ENCODE measurements at regions of chrX and their contacts with region 1.

Region 1: GRCh38 chrX:112642349-112642748 is 37.4 kb downstream of the LHFPL1 start:
- DNase-seq: peak in 7 of 9 experiments; percentile 0 to 50 (median 17)
- ATAC-seq: peak; percentile 44
- H3K4me3 ChIP-seq: no peak overlapping the region
- H3K4me3 Mint-ChIP-seq: no peak overlapping the region
- H3K27ac ChIP-seq: no peak overlapping the region
- H3K27ac Mint-ChIP-seq: no peak overlapping the region
- H3K4me1 ChIP-seq: no peaks in the 10 kb centered on the region
- H3K4me1 Mint-ChIP-seq: peaks cover 3% of the 10 kb centered on the region
- H3K27me3 ChIP-seq: no peaks in the 10 kb centered on the region
- H3K27me3 Mint-ChIP-seq: no peaks in the 10 kb centered on the region
- CTCF ChIP-seq: peak; percentile 56

Region 2: GRCh38 chrX:111869639-111870034 is 772.7 kb before region 1 on chrX:
- CTCF ChIA-PET with region 1: no interaction called
- POLR2A ChIA-PET with region 1: no interaction called
- intact Hi-C with region 1: loop called in 1 of 2 experiments (anchors 5 kb)
- DNase-seq: peak in 2 of 9 experiments; percentile 12 to 24
- ATAC-seq: no peak
- H3K4me3 ChIP-seq: no peak overlapping the region
- H3K4me3 Mint-ChIP-seq: no peak overlapping the region
- H3K27ac ChIP-seq: no peak overlapping the region
- H3K27ac Mint-ChIP-seq: no peak overlapping the region
- H3K4me1 ChIP-seq: no peaks in the 10 kb centered on the region
- H3K4me1 Mint-ChIP-seq: no peaks in the 10 kb centered on the region
- H3K27me3 ChIP-seq: no peaks in the 10 kb centered on the region
- H3K27me3 Mint-ChIP-seq: peaks cover 11% of the 10 kb centered on the region
- CTCF ChIP-seq: peak; percentile 42

Region 3: DNA sequence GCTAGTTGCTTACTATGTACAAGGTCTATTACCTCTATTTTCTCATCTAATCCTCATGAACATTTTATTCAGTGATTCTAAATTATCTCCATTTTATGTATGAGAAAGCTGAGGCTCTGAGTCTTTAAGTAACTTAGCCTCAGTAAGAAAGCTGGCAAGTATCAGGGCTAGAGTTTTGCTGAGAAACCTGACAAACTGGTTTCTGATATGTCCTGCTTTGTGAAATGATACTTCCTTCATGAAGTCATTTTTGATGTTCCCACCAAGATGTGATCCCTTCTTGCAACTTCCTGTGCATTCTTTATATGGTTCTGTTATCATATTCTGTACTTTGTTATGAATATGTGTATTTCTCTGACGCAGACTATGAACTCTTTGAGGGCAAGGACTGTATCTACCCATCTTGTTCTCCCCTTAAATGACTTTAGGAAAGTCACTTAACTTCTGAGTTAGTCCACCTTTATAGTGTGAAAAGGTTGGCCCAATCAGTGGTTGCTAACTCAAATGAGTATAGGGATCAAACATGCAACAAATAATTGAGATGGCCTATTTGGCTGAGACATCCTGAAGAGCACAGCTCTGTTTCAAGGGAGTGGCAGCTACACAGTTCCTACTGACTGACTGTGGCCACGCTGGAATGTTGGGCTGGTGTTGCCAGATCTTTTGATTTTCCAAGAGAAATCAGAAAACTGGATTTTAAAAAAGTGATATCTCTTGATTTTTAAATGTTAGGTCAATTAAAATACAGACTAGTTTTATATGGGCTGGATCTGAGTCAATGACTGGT is 326.2 kb after region 1 on chrX:
- CTCF ChIA-PET with region 1: no interaction called
- POLR2A ChIA-PET with region 1: no interaction called
- intact Hi-C with region 1: no loop called
- DNase-seq: no peak
- ATAC-seq: no peak
- H3K4me3 ChIP-seq: no peak overlapping the region
- H3K4me3 Mint-ChIP-seq: no peak overlapping the region
- H3K27ac ChIP-seq: no peak overlapping the region
- H3K27ac Mint-ChIP-seq: no peak overlapping the region
- H3K4me1 ChIP-seq: no peaks in the 10 kb centered on the region
- H3K4me1 Mint-ChIP-seq: no peaks in the 10 kb centered on the region
- H3K27me3 ChIP-seq: no peaks in the 10 kb centered on the region
- H3K27me3 Mint-ChIP-seq: peaks cover 2% of the 10 kb centered on the region
- CTCF ChIP-seq: no peak

Measured in CD8-positive, alpha-beta T cell (primary cell).